ENCODE measurements at regions of chr4 and their contacts with region 1.

Region 1: DNA sequence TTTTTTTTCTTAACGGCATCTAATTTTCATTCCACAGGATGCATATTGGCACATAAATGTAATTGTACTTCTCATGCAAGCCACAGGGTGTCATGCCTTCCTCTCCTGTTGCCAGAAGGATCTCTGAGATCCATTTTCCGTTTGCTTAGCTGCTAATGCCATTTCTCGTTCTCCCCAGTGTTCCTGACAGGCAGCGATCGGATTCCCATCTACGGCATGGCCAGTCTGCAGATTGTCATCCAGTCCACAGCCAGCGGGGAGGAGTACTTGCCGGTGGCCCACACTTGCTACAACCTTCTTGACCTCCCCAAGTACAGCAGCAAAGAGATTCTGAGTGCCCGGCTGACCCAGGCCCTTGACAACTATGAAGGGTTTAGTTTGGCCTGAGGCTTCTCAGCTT is 8.9 kb upstream of the NAP1L5 start:
- DNase-seq: peak; percentile 77
- ATAC-seq: peak; percentile 76
- H3K4me3 ChIP-seq: no peak overlapping the region
- H3K27ac ChIP-seq: 0 out of 2 replicates have a peak overlapping the region, but pooled peaks have one; percentile 26
- H3K4me1 ChIP-seq: peaks cover 10% of the 10 kb centered on the region
- H3K27me3 ChIP-seq: no peaks in the 10 kb centered on the region
- CTCF ChIP-seq: peak; percentile 74
- POLR2A ChIP-seq: no peak
- RAD21 ChIP-seq: peak; percentile 88

Region 2: DNA sequence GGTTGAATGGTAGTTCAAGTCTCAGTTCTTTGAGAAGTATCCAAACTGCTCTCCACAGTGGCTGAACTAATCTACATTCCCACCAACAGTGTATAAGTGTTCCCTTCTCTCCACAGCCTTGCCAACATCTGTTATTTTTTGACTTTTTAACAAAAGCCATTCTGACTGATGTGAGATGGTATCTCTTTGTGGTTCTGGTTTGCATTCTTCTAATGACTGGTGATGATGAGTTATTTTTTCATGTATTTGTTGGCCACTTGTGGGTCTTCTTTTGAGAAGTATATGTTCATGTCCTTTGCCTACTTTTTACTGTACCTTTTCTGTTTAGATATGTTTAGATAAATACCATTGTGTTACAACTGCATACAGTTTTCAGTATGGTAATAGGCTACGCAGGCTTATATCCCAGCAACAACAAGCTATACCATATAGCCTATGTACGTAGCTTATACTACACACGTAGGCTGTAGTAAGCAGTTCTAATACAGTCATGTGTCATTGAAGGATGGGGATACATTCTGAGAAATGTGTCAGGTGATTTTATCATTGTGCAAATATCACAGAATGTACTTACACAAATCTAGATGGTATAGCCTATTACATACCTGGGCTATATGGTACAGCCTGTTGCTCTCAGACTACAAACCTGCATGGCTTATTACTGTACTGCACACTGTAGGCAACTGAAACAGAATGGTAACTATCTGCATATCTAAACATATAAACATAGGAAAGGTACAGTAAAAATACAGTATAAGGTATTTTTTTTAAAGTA is 1514.2 kb before region 1 on chr4:
- CTCF ChIA-PET with region 1: no interaction called
- POLR2A ChIA-PET with region 1: no interaction called
- dilution Hi-C with region 1: no loop called
- in situ Hi-C with region 1: no loop called
- intact Hi-C with region 1: no loop called
- DNase-seq: no peak
- ATAC-seq: no peak
- H3K4me3 ChIP-seq: no peak overlapping the region
- H3K27ac ChIP-seq: no peak overlapping the region
- H3K4me1 ChIP-seq: peaks cover 3% of the 10 kb centered on the region; the same call in 1 of the 2 replicates
- H3K27me3 ChIP-seq: no peaks in the 10 kb centered on the region
- CTCF ChIP-seq: no peak
- POLR2A ChIP-seq: no peak
- RAD21 ChIP-seq: no peak

Region 3: DNA sequence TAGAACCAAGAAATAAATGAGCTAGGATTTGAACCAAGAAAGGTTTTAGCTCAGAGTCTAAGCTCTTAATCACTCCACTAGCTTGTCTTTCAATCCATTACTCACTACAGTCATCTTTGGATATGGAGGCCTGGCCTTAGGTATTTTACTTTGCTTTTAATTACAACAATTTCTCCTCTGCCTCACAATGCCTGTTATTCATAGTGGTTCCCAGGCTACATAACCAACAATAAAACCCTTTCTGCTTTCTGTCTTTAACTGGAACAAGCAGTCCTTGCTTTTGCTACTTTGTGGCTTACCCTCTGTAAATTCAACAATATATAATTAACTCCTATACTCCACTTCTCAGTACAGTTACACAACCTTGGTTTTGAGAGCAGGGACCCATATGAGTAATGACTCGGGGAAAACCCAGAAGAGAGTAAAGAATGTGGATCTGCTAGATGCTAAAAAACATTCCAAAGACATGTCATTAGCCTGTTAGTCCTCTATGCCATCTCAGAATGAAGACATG is 85.8 kb after region 1 on chr4:
- CTCF ChIA-PET with region 1: interaction called, 10 read pairs
- POLR2A ChIA-PET with region 1: no interaction called
- dilution Hi-C with region 1: no loop called
- in situ Hi-C with region 1: no loop called
- intact Hi-C with region 1: loop called (anchors 5 kb)
- DNase-seq: peak; percentile 86
- ATAC-seq: peak; percentile 94
- H3K4me3 ChIP-seq: no peak overlapping the region
- H3K27ac ChIP-seq: no peak overlapping the region
- H3K4me1 ChIP-seq: peaks cover 6% of the 10 kb centered on the region; the same call in 1 of the 2 replicates
- H3K27me3 ChIP-seq: no peaks in the 10 kb centered on the region
- CTCF ChIP-seq: no peak
- POLR2A ChIP-seq: no peak
- RAD21 ChIP-seq: no peak